ENCODE measurements at regions of chr22 and their contacts with region 1.

Region 1: GRCh38 chr22:36552289-36552688 is 23.3 kb upstream of the EIF3D start:
- DNase-seq: no peak
- ATAC-seq: no peak
- H3K4me3 ChIP-seq: no peak overlapping the region
- H3K27ac ChIP-seq: no peak overlapping the region
- H3K4me1 ChIP-seq: no peaks in the 10 kb centered on the region
- H3K27me3 ChIP-seq: no peaks in the 10 kb centered on the region

Region 2: DNA sequence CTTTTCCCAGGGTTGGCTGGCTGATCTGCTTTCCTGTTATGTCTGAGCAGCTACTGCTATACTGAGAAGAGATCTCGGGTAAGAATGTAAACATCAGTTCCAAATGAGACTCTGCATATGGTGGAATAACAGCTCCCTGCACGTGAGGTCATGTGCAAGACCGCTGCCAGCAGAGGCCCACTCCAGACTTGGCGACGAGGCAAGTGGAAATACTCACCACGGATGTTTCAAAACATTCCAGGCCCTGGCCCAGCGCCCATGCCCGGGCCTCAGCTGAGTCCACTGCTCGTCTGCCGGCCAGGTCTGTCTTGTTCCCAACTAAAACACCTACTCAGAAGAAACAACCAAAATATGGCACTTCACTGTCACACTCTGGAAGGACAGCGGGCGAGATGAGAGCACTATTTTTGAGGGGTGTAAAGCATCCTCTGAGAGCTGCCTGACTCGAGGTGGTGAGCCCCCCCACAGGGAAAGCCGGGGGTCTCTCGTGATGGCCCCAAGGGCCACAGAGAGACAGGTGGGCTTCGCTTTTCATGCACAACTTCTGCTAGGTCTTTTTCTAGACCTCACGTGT is 210.5 kb after region 1 on chr22:
- intact Hi-C with region 1: loop called in 1 of 4 experiments (anchors 10 kb)
- DNase-seq: peak; percentile 73 to 86 (median 85)
- ATAC-seq: peak; percentile 62 to 67
- H3K4me3 ChIP-seq: no peak overlapping the region
- H3K27ac ChIP-seq: no peak overlapping the region
- H3K4me1 ChIP-seq: no peaks in the 10 kb centered on the region
- H3K27me3 ChIP-seq: no peaks in the 10 kb centered on the region